ENCODE measurements at regions of chr6 and their contacts with region 1.

Region 1: GRCh38 chr6:122471107-122472021 is at the start of gene SERINC1:
- DNase-seq: peak; percentile 93
- H3K4me3 Mint-ChIP-seq: peak within 1 kb of the TSS; percentile 97
- H3K27ac Mint-ChIP-seq: peak within 1 kb of the TSS; percentile 97
- H3K4me1 Mint-ChIP-seq: peaks cover 27% of the 10 kb centered on the region
- H3K27me3 Mint-ChIP-seq: no peaks in the 10 kb centered on the region
- total RNA-seq, gene SERINC1: 81.5 to 83.2 TPM

Region 2: GRCh38 chr6:122399384-122400158 is 71.8 kb before region 1 on chr6 and contains the start of gene HSF2:
- CTCF ChIA-PET with region 1: no interaction called
- POLR2A ChIA-PET with region 1: interaction called, 26 read pairs
- DNase-seq: peak; percentile 95
- H3K4me3 Mint-ChIP-seq: peak within 1 kb of the TSS; percentile 96
- H3K27ac Mint-ChIP-seq: peak within 1 kb of the TSS; percentile 87
- H3K4me1 Mint-ChIP-seq: peaks cover 28% of the 10 kb centered on the region
- H3K27me3 Mint-ChIP-seq: no peaks in the 10 kb centered on the region
- total RNA-seq, gene HSF2: 12.0 to 13.3 TPM

Region 3: DNA sequence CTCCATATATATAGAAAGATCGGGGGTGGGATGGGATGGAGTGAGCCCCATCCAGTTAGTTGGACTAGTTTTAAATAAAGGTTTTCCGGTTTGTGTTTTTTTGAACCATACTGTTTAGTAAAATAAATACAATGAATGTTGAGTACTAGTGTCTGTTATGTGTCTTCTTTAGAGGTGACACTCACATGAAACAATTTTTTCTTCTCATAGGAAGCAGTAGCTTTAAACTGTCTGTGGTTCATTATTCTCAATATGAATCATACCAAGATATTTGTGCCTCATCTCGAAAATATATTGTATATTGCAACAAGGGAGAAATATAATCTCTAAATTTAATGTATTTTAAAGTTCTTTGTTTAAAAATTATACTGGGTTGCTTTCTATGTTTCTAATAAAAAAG is 38.5 kb before region 1 on chr6:
- CTCF ChIA-PET with region 1: no interaction called
- POLR2A ChIA-PET with region 1: interaction called, 14 read pairs
- DNase-seq: no peak
- H3K4me3 Mint-ChIP-seq: no peak overlapping the region
- H3K27ac Mint-ChIP-seq: no peak overlapping the region
- H3K4me1 Mint-ChIP-seq: peaks cover 8% of the 10 kb centered on the region
- H3K27me3 Mint-ChIP-seq: no peaks in the 10 kb centered on the region

Region 4: GRCh38 chr6:122449069-122449468 is 22.3 kb before region 1 on chr6:
- CTCF ChIA-PET with region 1: no interaction called
- POLR2A ChIA-PET with region 1: interaction called, 10 read pairs
- DNase-seq: no peak
- H3K4me3 Mint-ChIP-seq: no peak overlapping the region
- H3K27ac Mint-ChIP-seq: no peak overlapping the region
- H3K4me1 Mint-ChIP-seq: peaks cover 6% of the 10 kb centered on the region
- H3K27me3 Mint-ChIP-seq: no peaks in the 10 kb centered on the region

Region 5: DNA sequence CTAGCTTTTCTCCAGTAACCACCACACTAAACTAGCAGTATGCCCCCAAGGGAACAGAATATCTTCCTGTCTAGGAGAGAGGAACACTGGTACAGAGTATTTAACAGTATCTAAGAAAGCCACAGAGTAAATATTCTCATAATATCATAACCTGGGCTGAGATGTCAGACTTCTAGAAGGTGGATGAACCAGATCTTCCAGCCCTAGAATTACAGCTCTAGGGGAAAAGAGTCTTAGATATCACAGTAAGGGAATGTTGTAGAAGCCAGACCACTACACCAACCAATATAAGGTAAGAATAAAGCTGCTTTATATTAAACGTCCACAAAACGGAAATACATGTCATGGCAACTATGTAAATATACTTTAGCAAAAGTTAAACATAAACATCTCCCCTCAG is 12.2 kb before region 1 on chr6:
- CTCF ChIA-PET with region 1: no interaction called
- POLR2A ChIA-PET with region 1: interaction called, 12 read pairs
- DNase-seq: no peak
- H3K4me3 Mint-ChIP-seq: no peak overlapping the region
- H3K27ac Mint-ChIP-seq: no peak overlapping the region
- H3K4me1 Mint-ChIP-seq: peaks cover 27% of the 10 kb centered on the region
- H3K27me3 Mint-ChIP-seq: no peaks in the 10 kb centered on the region

Region 6: GRCh38 chr6:122530440-122531046 is 59.2 kb after region 1 on chr6:
- CTCF ChIA-PET with region 1: interaction called, 17 read pairs
- POLR2A ChIA-PET with region 1: interaction called, 6 read pairs
- DNase-seq: peak; percentile 40
- H3K4me3 Mint-ChIP-seq: no peak overlapping the region
- H3K27ac Mint-ChIP-seq: no peak overlapping the region
- H3K4me1 Mint-ChIP-seq: no peaks in the 10 kb centered on the region
- H3K27me3 Mint-ChIP-seq: peaks cover 31% of the 10 kb centered on the region